AG04449 (cell line): ENCODE measurements at regions of chr17 and their contacts with region 1.

Region 1: DNA sequence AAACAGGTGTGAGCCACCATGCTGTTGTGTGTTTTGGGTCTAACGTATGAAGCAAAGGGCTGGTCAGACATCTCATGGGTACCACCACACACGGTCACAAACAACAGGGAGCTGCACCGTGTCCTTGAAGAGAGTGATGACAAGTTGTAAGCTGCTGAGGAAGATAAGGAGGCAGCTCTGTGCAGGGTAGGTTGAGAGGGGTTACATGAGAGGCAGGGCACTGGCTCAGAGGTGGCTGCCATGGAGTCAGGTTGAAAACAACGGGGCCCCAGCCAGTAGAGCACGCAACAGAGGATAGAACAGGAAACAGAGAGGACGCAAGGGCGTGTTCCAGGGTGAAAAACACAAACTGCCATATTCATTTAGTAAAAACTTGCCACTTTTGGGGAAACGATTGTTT is 52.2 kb downstream of the TRARG1 start:
- DNase-seq: no peak
- H3K4me3 ChIP-seq: no peak overlapping the region
- CTCF ChIP-seq: no peak

Region 2: DNA sequence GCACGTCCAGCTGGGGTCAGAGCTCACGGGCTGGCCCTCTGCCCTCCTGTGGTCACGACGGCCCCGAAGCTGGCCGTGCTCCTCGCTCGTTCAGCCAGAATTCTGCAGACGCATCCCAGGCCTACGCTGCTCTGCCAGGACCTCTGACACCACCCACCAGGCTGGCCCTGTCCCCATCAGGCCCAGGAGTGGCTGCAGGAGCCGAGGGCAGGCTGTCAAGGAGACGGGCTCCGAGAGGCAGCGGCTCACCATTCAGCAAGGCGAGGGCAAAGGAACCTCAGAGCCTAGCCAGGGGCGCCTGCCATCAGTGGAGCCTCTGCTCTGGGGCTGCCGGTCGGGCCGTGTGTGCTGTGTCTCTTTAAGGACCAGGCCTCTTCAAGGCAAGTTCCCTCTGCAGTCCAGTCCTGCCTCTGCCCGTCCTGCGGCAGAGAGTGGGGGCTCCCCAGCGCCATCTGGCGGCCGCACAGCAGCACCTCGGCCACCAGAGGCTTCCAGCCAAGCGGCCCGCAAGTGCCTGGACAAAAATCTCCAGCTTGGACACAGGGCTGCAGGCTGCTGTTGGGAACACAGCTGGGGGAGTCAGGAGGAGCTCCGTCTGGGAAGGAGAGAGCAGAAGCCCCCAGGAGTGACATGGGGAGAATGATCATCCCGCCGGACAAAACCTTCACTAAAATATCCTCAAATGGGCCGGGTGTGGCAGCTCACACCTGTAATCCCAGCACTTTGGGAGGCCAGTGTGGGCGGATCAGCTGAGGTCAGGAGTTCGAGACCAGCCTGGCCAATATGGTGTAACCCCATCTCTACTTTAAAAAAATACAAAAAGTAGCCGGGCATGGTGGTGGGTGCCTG is 144.6 kb before region 1 on chr17:
- CTCF ChIA-PET with region 1: no interaction called
- POLR2A ChIA-PET with region 1: no interaction called
- DNase-seq: peak; percentile 49
- H3K4me3 ChIP-seq: peak overlapping the region; percentile 25; the same call in 1 of the 2 replicates
- CTCF ChIP-seq: peak; percentile 99

Region 3: GRCh38 chr17:1260086-1260769 is 71.5 kb before region 1 on chr17:
- CTCF ChIA-PET with region 1: interaction called, 15 read pairs
- POLR2A ChIA-PET with region 1: no interaction called
- DNase-seq: no peak
- H3K4me3 ChIP-seq: peak overlapping the region; percentile 66
- CTCF ChIP-seq: no peak

Region 4: GRCh38 chr17:1267471-1267947 is 64.2 kb before region 1 on chr17:
- CTCF ChIA-PET with region 1: interaction called, 13 read pairs
- POLR2A ChIA-PET with region 1: no interaction called
- DNase-seq: no peak
- H3K4me3 ChIP-seq: peak overlapping the region; percentile 71
- CTCF ChIP-seq: no peak

Region 5: DNA sequence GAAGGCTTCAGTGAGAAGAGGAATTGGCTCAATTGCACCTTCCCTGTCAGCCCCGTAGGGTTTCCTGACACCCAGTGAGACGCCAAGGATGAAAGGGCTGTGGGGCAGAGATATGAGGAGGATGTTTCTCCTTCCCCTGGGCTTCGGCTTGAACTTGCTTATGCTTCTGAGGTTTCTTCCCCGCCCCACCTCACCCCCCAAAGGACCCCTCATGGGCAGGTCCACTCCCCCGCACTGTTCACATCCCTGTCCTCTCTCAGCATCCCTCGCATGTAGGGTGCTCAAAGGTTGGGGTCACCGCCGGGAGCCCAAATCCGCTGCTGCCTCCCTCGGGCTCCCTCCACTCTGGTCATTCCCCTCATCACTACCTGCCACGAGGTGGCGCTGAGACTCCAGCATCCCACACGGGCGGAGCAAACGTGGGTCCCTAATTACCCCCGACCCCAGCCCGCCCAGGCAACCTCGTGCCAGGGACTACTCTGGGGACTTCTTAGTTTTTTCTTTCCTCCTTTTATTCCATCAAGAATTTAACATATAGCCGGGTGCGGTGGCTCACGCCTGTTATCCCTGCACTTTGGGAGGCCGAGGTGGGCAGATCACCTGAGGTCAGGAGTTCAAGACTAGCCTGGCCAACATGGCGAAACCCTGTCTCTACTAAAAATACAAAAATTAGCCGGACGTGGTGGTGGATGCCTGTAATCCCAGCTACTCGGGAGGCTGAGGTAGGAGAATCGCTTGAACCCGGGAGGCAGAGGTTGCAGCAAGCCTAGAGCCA is 55.6 kb before region 1 on chr17:
- CTCF ChIA-PET with region 1: interaction called, 13 read pairs
- POLR2A ChIA-PET with region 1: no interaction called
- DNase-seq: no peak
- H3K4me3 ChIP-seq: no peak overlapping the region
- CTCF ChIP-seq: peak; percentile 88

Region 6: DNA sequence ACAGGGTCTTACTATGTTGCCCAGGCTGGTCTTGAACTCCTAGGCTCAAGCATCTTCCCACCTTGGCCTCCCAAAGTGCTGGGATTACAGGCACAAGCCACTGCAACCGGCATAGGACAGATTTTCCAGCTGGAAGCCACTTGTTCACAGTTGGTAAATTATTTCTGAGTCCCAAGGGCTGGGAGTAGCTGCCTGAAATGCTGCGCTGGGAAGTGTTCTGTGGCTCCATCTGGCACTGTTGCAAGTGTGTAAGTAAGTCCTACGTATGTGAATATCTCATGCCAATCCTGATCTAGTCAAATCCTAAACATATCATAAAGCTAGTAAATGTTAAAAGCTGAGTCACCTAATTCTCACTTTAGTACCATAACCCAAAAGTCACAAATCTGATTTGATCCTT is 20.3 kb after region 1 on chr17:
- CTCF ChIA-PET with region 1: interaction called, 10 read pairs
- POLR2A ChIA-PET with region 1: no interaction called
- DNase-seq: no peak
- H3K4me3 ChIP-seq: no peak overlapping the region
- CTCF ChIP-seq: no peak